ENCODE measurements at regions of chr5 and their contacts with region 1.

Region 1: GRCh38 chr5:172006321-172007174 is at the start of gene FBXW11:
- DNase-seq: peak; percentile 95 to 98 (median 97)
- H3K4me3 ChIP-seq: peak within 1 kb of the TSS; percentile 83 to 99 (median 96)
- H3K27ac ChIP-seq: peak within 1 kb of the TSS; percentile 96 to 97
- H3K4me1 ChIP-seq: peaks cover 18 to 51% (median 41%) of the 10 kb centered on the region in 4 experiments
- H3K27me3 ChIP-seq: no peaks in the 10 kb centered on the region

Region 2: GRCh38 chr5:172035039-172035438 is 28.5 kb after region 1 on chr5:
- CTCF ChIA-PET with region 1: interaction called, 11 read pairs
- POLR2A ChIA-PET with region 1: no interaction called
- DNase-seq: peak in 2 of 3 donors; percentile 25 to 29
- H3K4me3 ChIP-seq: peak overlapping the region in 1 of 7 experiments; percentile 18
- H3K27ac ChIP-seq: no peak overlapping the region
- H3K4me1 ChIP-seq: peaks cover 3 to 9% (median 6%) of the 10 kb centered on the region in 4 experiments
- H3K27me3 ChIP-seq: no peaks in the 10 kb centered on the region

Region 3: DNA sequence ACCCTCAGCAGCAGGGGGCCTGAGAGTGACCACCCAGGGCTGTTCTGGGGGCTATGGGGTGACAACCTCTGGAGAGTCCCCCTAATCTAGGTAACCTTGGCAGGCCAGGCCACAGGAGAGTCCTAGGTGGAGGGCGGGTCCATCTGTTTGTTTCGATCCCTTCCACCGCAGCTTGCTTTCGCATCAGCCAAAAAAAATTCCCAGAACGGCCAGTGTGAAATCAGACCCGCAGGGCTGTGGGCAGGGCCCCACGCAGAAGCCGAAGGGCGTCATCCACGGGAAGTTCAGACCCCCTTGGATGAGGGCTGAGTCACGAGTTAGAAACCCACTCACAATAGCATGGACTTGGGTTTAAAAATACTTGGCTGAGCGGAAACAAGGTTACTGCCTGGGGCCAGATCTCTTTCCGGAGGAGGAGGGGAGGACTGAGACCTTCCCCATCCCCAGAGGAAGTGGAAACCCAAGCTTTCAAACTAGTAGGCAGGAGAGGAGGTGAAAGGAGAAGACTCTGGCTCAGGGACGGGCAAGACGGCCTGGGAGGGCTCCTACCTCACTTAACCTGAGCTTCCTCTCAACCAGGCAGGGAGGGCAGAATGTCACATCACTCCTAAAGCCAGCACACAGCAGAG is 172.9 kb after region 1 on chr5:
- CTCF ChIA-PET with region 1: no interaction called
- POLR2A ChIA-PET with region 1: no interaction called
- DNase-seq: peak; percentile 85 to 89 (median 87)
- H3K4me3 ChIP-seq: peak overlapping the region in 6 of 7 experiments; percentile 19 to 71 (median 54)
- H3K27ac ChIP-seq: peak overlapping the region; percentile 77 to 88
- H3K4me1 ChIP-seq: peaks cover 38 to 95% (median 81%) of the 10 kb centered on the region in 4 experiments
- H3K27me3 ChIP-seq: no peaks in the 10 kb centered on the region

Measured in common myeloid progenitor, CD34-positive (primary cell).